ENCODE measurements at regions of chr6 and their contacts with region 1.

Region 1: DNA sequence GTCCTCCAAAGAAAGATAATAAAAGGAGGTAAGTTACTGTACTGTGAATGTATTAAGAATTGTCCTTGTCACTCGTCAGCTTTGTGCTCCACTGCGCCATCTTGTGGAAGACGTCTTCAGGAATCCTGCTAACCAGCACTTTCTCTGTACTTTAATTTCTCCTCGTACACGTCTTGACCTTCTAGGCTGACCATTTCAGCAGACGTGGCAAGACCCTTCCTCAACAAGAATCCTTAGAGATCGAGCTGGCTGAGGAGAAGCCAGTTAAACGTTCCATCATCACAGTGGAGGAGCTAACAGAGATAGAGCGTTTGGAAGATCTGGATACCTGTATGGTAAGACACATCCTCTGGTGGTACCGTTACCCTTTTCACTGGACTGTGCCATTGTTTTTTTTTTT is 95.5 kb upstream of the SCGN start:
- DNase-seq: peak; percentile 87
- ATAC-seq: peak; percentile 82
- H3K4me3 Mint-ChIP-seq: no peak overlapping the region
- H3K27ac Mint-ChIP-seq: 0 out of 2 replicates have a peak overlapping the region, but pooled peaks have one; percentile 78
- H3K4me1 Mint-ChIP-seq: peaks cover 7% of the 10 kb centered on the region
- H3K27me3 Mint-ChIP-seq: no peaks in the 10 kb centered on the region
- CTCF ChIP-seq: peak; percentile 63

Region 2: GRCh38 chr6:25499615-25500235 is 56.8 kb before region 1 on chr6:
- CTCF ChIA-PET with region 1: interaction called, 14 read pairs
- POLR2A ChIA-PET with region 1: no interaction called
- DNase-seq: no peak
- ATAC-seq: no peak
- H3K4me3 Mint-ChIP-seq: no peak overlapping the region
- H3K27ac Mint-ChIP-seq: peak overlapping the region; percentile 66
- H3K4me1 Mint-ChIP-seq: peaks cover 23% of the 10 kb centered on the region
- H3K27me3 Mint-ChIP-seq: no peaks in the 10 kb centered on the region
- CTCF ChIP-seq: no peak

Region 3: DNA sequence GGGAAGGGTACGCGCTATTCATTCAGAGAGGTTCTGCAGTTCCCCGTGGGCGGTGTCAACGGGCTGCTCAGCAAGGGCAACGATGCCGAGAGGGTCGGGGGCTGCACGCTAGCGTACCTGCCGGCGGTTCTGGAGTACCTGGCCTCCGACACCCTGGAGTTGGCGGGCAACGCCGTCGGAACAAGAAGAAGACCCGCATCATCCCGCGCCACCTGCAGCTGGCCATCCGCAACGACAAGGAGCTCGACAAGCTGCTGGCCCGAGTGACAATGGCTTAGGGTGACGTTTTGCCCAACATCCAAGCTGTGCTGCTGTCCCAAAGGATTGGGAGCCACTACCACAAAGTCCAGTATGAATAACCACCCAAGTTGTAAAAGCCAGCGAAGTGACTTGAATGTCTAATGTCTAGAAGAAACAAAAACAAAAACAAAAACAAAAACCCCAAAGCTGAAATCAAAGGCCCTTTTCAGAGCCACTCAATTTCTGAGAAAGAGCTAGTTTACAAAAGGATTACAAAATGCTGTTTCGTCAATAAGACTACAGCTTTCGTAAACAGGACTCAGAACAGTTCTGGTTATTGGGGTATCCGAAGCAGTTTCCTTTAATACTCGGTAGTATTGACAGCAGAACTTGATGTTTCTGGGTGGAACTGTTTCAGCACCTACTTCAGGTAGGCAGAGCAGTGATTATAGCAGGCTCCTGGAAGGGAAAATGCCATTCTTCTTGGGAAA is 176.1 kb after region 1 on chr6:
- CTCF ChIA-PET with region 1: no interaction called
- POLR2A ChIA-PET with region 1: no interaction called
- DNase-seq: peak; percentile 73
- ATAC-seq: peak; percentile 90
- H3K4me3 Mint-ChIP-seq: peak overlapping the region; percentile 29
- H3K27ac Mint-ChIP-seq: no peak overlapping the region
- H3K4me1 Mint-ChIP-seq: peaks cover 8% of the 10 kb centered on the region; the same call in 1 of the 2 replicates
- H3K27me3 Mint-ChIP-seq: no peaks in the 10 kb centered on the region
- CTCF ChIP-seq: 0 out of 2 replicates have a peak, but pooled peaks have one; percentile 25